Activated T-helper 1 cell treated with anti-CD3 and anti-CD28 coated beads, Interleukin-12 subunit alpha, Interleukin-12 subunit beta, Interleukin-2, Interleukin-4 antibody, amounts not matched to agents 30 ng/mL and 10 ng/mL and 1 ng/mL, durations not matched to agents 14 hours and 24 hours and 36 hours (primary cell): ENCODE measurements at regions of chr4 and their contacts with region 1.

Region 1: DNA sequence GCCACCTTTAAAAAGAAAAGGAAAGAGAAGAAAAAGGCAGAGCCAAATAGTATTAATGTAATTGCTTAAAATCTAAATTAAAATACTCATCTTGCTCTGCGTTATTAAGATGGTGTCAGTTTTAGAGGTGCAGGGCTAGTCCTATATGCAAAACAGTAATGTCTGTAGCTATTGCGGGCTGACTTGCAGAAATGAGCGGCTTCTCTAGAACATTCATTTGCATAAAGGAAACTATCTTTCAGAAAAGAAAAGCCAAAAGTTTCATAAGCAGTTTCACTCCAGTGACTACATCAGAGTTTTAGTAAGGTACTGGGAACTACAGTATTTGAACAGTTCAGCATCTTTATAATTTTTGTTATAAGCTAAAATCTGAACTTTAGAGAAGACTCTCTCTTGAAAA is 6.0 kb downstream of the SMAD1 start:
- DNase-seq: no peak
- H3K4me3 Mint-ChIP-seq: no peak overlapping the region
- H3K27ac Mint-ChIP-seq: no peak overlapping the region
- H3K4me1 Mint-ChIP-seq: peaks cover 10% of the 10 kb centered on the region
- H3K27me3 Mint-ChIP-seq: peaks cover 23% of the 10 kb centered on the region

Region 2: GRCh38 chr4:145207934-145208333 is 279.7 kb before region 1 on chr4:
- intact Hi-C with region 1: no loop called
- DNase-seq: no peak
- H3K4me3 Mint-ChIP-seq: no peak overlapping the region
- H3K27ac Mint-ChIP-seq: no peak overlapping the region
- H3K4me1 Mint-ChIP-seq: no peaks in the 10 kb centered on the region
- H3K27me3 Mint-ChIP-seq: peaks cover 4% of the 10 kb centered on the region

Region 3: GRCh38 chr4:145299380-145300076 is 188.1 kb before region 1 on chr4:
- intact Hi-C with region 1: loop called (anchors 1 kb)
- DNase-seq: peak; percentile 2
- H3K4me3 Mint-ChIP-seq: no peak overlapping the region
- H3K27ac Mint-ChIP-seq: no peak overlapping the region
- H3K4me1 Mint-ChIP-seq: peaks cover 17% of the 10 kb centered on the region
- H3K27me3 Mint-ChIP-seq: peaks cover 6% of the 10 kb centered on the region